GM12878 (cell line): ENCODE measurements at regions of chr12 and their contacts with region 1.

Region 1: DNA sequence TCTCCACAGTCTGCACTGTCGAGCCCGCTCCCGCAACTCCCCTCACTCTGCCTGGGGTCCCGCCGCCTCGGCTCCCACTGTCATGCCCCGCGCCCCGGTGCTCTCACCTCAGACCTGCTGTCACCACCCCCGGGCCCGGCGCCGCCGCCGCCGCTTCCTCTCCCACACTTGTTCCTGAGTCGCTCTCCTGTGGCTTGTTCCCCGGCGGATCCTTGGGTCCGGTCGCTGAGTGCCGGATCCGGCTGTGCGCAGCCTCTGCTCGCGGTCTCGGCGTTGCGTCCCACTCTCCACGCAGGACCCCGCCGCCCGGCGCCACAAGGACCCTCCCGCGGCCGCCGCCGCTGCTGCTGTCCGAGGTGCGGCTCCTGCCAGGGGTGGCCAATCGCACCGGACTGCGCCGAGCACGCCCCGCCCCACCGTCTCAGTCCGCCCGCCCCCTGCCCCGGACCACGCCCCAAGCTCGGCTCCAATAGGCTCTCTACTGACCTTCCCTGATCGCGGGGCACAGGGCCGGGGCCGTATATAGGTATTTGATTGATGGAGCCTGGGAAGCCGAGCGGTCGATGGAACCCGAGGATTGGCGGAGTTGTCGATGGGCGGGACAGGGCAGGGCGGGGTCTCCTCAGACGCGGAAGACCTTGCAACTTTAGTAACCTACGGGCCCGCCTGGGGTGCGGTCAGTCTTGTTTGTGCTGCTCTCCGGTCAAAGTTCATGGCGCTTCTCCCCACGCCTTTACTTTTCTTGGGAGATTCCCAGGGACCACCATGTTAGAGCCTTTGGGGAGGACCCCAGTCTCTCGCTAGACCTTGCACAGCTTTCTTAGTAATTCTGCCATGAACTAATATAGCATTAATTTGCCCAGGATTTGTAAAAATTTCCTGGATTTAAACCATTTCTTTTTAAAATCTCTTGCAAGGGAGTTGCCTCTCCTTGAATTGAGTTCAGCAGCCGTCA is at the start of gene TAOK3:
- DNase-seq: peak; percentile 91
- ATAC-seq: peak; percentile 85
- H3K4me3 ChIP-seq: peak within 1 kb of the TSS; percentile 92
- H3K27ac ChIP-seq: peak within 1 kb of the TSS; percentile 76
- H3K4me1 ChIP-seq: peaks cover 3% of the 10 kb centered on the region; the same call in 1 of the 2 replicates
- H3K27me3 ChIP-seq: no peaks in the 10 kb centered on the region
- CTCF ChIP-seq: no peak
- EP300 ChIP-seq: no peak
- POLR2A ChIP-seq: peak; percentile 96
- RAD21 ChIP-seq: no peak
- polyA plus RNA-seq, gene TAOK3: 41.3 to 42.5 TPM

Region 2: GRCh38 chr12:117190210-117190781 is 1182.5 kb before region 1 on chr12 and contains the start of gene FBXO21:
- CTCF ChIA-PET with region 1: no interaction called
- POLR2A ChIA-PET with region 1: no interaction called
- RAD21 ChIA-PET with region 1: no interaction called
- SMC1A ChIA-PET with region 1: no interaction called
- in situ Hi-C with region 1: loop called (anchors 25 kb)
- intact Hi-C with region 1: no loop called
- DNase-seq: peak; percentile 33
- ATAC-seq: peak; percentile 98
- H3K4me3 ChIP-seq: peak within 1 kb of the TSS; percentile 84
- H3K27ac ChIP-seq: peak within 1 kb of the TSS; percentile 14; the same call in 1 of the 2 replicates
- H3K4me1 ChIP-seq: no peaks in the 10 kb centered on the region; the same call in 1 of the 2 replicates
- H3K27me3 ChIP-seq: no peaks in the 10 kb centered on the region
- CTCF ChIP-seq: no peak
- EP300 ChIP-seq: no peak
- POLR2A ChIP-seq: peak; percentile 99
- RAD21 ChIP-seq: no peak
- polyA plus RNA-seq, gene FBXO21: 5.5 to 9.4 TPM

Region 3: GRCh38 chr12:118120579-118121363 is 252.0 kb before region 1 on chr12:
- CTCF ChIA-PET with region 1: interaction called, 171 read pairs
- POLR2A ChIA-PET with region 1: interaction called, 19 read pairs
- RAD21 ChIA-PET with region 1: interaction called, 126 read pairs
- SMC1A ChIA-PET with region 1: interaction called, 105 read pairs
- in situ Hi-C with region 1: no loop called
- intact Hi-C with region 1: loop called (anchors 1 kb)
- DNase-seq: no peak
- ATAC-seq: peak; percentile 97
- H3K4me3 ChIP-seq: no peak overlapping the region
- H3K27ac ChIP-seq: peak overlapping the region; percentile 83
- H3K4me1 ChIP-seq: no peaks in the 10 kb centered on the region; the same call in 1 of the 2 replicates
- H3K27me3 ChIP-seq: no peaks in the 10 kb centered on the region
- CTCF ChIP-seq: peak; percentile 50 to 70 (median 64)
- EP300 ChIP-seq: no peak
- POLR2A ChIP-seq: no peak
- RAD21 ChIP-seq: peak; percentile 70

Region 4: GRCh38 chr12:118175823-118176447 is 196.9 kb before region 1 on chr12:
- CTCF ChIA-PET with region 1: interaction called, 277 read pairs
- POLR2A ChIA-PET with region 1: interaction called, 5 read pairs
- RAD21 ChIA-PET with region 1: interaction called, 166 read pairs
- SMC1A ChIA-PET with region 1: interaction called, 185 read pairs
- in situ Hi-C with region 1: loop called (anchors 5 kb)
- intact Hi-C with region 1: no loop called
- DNase-seq: peak; percentile 45
- ATAC-seq: peak; percentile 99
- H3K4me3 ChIP-seq: no peak overlapping the region
- H3K27ac ChIP-seq: peak overlapping the region; percentile 22; the same call in 1 of the 2 replicates
- H3K4me1 ChIP-seq: peaks cover 8% of the 10 kb centered on the region
- H3K27me3 ChIP-seq: no peaks in the 10 kb centered on the region
- CTCF ChIP-seq: no peak
- EP300 ChIP-seq: no peak
- POLR2A ChIP-seq: no peak
- RAD21 ChIP-seq: no peak

Region 5: GRCh38 chr12:118220702-118221101 is 152.1 kb before region 1 on chr12:
- CTCF ChIA-PET with region 1: interaction called, 24 read pairs
- POLR2A ChIA-PET with region 1: interaction called, 3 read pairs
- RAD21 ChIA-PET with region 1: interaction called, 10 read pairs
- SMC1A ChIA-PET with region 1: interaction called, 3 read pairs
- in situ Hi-C with region 1: no loop called
- intact Hi-C with region 1: no loop called
- DNase-seq: no peak
- ATAC-seq: peak; percentile 46
- H3K4me3 ChIP-seq: no peak overlapping the region
- H3K27ac ChIP-seq: no peak overlapping the region
- H3K4me1 ChIP-seq: peaks cover 5% of the 10 kb centered on the region
- H3K27me3 ChIP-seq: no peaks in the 10 kb centered on the region
- CTCF ChIP-seq: no peak
- EP300 ChIP-seq: no peak
- POLR2A ChIP-seq: no peak
- RAD21 ChIP-seq: no peak

Region 6: GRCh38 chr12:118302066-118302465 is 70.8 kb before region 1 on chr12:
- CTCF ChIA-PET with region 1: interaction called, 85 read pairs
- POLR2A ChIA-PET with region 1: interaction called, 20 read pairs
- RAD21 ChIA-PET with region 1: interaction called, 72 read pairs
- SMC1A ChIA-PET with region 1: interaction called, 117 read pairs
- in situ Hi-C with region 1: no loop called
- intact Hi-C with region 1: loop called (anchors 2 kb)
- DNase-seq: no peak
- ATAC-seq: peak; percentile 45
- H3K4me3 ChIP-seq: no peak overlapping the region
- H3K27ac ChIP-seq: peak overlapping the region; percentile 48; the same call in 1 of the 2 replicates
- H3K4me1 ChIP-seq: peaks cover 29% of the 10 kb centered on the region
- H3K27me3 ChIP-seq: no peaks in the 10 kb centered on the region
- CTCF ChIP-seq: no peak
- EP300 ChIP-seq: no peak
- POLR2A ChIP-seq: no peak
- RAD21 ChIP-seq: no peak

Region 7: DNA sequence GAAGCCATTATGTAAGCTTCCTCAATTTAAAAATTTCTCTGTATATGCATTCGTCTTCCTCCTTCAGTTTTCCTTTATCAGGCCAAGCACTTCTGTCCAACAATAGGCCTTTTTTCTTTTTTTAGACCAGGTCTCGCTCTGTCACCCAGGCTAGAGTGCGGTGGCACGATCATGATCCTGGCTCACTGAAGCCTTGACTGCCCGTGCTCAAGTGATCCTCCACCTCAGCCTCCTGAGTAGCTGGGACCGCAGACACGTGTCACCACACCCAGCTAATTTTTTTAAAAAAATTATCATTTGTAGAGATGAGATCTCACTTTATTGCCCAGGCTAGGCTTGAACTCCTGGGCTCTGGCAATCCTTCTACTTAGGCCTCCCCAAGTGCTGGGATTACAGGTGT is 25.9 kb before region 1 on chr12:
- CTCF ChIA-PET with region 1: interaction called, 17 read pairs
- POLR2A ChIA-PET with region 1: interaction called, 6 read pairs
- RAD21 ChIA-PET with region 1: interaction called, 24 read pairs
- SMC1A ChIA-PET with region 1: interaction called, 16 read pairs
- in situ Hi-C with region 1: no loop called
- intact Hi-C with region 1: no loop called
- DNase-seq: no peak
- ATAC-seq: peak; percentile 89
- H3K4me3 ChIP-seq: no peak overlapping the region; the same call in 1 of the 2 replicates
- H3K27ac ChIP-seq: peak overlapping the region; percentile 21
- H3K4me1 ChIP-seq: peaks cover 21% of the 10 kb centered on the region; the same call in 1 of the 2 replicates
- H3K27me3 ChIP-seq: no peaks in the 10 kb centered on the region
- CTCF ChIP-seq: no peak
- EP300 ChIP-seq: no peak
- POLR2A ChIP-seq: no peak
- RAD21 ChIP-seq: no peak

Region 8: DNA sequence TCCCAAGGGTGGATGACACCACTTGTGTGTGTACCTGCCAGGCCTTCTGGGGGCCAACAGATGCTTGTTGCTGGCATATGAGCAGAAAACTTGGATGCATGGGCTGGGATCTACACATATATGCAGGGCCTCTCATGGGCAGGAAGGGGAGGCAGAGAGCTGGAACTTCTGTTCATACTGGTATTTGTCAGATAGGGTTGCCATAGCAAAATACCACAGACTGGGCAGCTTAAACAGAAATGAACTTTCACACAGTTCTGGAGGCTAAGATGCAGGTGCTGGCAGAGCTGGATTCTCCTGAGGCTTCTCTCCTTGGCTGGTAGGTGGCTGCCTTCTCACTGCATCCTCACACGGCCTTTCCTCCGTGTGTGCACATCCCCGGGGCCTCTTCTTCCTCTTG is 125.4 kb after region 1 on chr12:
- CTCF ChIA-PET with region 1: no interaction called
- POLR2A ChIA-PET with region 1: no interaction called
- RAD21 ChIA-PET with region 1: no interaction called
- SMC1A ChIA-PET with region 1: no interaction called
- in situ Hi-C with region 1: no loop called
- intact Hi-C with region 1: no loop called
- DNase-seq: no peak
- ATAC-seq: no peak
- H3K4me3 ChIP-seq: no peak overlapping the region
- H3K27ac ChIP-seq: no peak overlapping the region
- H3K4me1 ChIP-seq: no peaks in the 10 kb centered on the region
- H3K27me3 ChIP-seq: no peaks in the 10 kb centered on the region
- CTCF ChIP-seq: no peak
- EP300 ChIP-seq: no peak
- POLR2A ChIP-seq: no peak
- RAD21 ChIP-seq: no peak

Region 9: GRCh38 chr12:118581371-118581770 is 208.6 kb after region 1 on chr12:
- CTCF ChIA-PET with region 1: no interaction called
- POLR2A ChIA-PET with region 1: no interaction called
- RAD21 ChIA-PET with region 1: no interaction called
- SMC1A ChIA-PET with region 1: no interaction called
- in situ Hi-C with region 1: no loop called
- intact Hi-C with region 1: no loop called
- DNase-seq: no peak
- ATAC-seq: no peak
- H3K4me3 ChIP-seq: no peak overlapping the region
- H3K27ac ChIP-seq: no peak overlapping the region
- H3K4me1 ChIP-seq: no peaks in the 10 kb centered on the region
- H3K27me3 ChIP-seq: no peaks in the 10 kb centered on the region
- CTCF ChIP-seq: no peak
- EP300 ChIP-seq: no peak
- POLR2A ChIP-seq: no peak
- RAD21 ChIP-seq: no peak